ENCODE measurements at regions of chr6 and their contacts with region 1.

Region 1: GRCh38 chr6:152290693-152291092 is 346.5 kb downstream of the SYNE1 start:
- DNase-seq: no peak
- ATAC-seq: no peak
- H3K4me3 Mint-ChIP-seq: no peak overlapping the region
- H3K27ac Mint-ChIP-seq: no peak overlapping the region
- H3K4me1 Mint-ChIP-seq: no peaks in the 10 kb centered on the region
- H3K27me3 Mint-ChIP-seq: no peaks in the 10 kb centered on the region

Region 2: DNA sequence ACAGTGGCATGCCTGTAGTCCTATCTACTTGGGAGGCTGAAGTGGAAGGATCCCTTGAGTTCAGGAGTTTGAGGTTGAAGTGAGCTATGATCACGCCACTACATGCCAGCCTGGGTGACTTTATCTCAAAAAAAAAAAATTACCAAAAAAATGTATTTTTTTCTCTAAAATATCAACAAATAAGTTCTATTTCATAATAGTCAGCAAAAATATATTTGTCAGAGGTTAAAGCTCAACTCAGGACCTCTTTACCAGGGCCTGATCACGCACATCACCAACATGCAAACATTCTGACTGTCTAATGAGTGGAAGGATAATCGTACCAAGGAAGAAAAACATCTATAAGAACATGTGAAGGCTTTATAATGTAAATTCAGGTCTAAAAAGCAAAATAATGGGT is 40.6 kb before region 1 on chr6:
- CTCF ChIA-PET with region 1: no interaction called
- DNase-seq: no peak
- ATAC-seq: no peak
- H3K4me3 Mint-ChIP-seq: no peak overlapping the region
- H3K27ac Mint-ChIP-seq: no peak overlapping the region
- H3K4me1 Mint-ChIP-seq: no peaks in the 10 kb centered on the region
- H3K27me3 Mint-ChIP-seq: no peaks in the 10 kb centered on the region

Region 3: DNA sequence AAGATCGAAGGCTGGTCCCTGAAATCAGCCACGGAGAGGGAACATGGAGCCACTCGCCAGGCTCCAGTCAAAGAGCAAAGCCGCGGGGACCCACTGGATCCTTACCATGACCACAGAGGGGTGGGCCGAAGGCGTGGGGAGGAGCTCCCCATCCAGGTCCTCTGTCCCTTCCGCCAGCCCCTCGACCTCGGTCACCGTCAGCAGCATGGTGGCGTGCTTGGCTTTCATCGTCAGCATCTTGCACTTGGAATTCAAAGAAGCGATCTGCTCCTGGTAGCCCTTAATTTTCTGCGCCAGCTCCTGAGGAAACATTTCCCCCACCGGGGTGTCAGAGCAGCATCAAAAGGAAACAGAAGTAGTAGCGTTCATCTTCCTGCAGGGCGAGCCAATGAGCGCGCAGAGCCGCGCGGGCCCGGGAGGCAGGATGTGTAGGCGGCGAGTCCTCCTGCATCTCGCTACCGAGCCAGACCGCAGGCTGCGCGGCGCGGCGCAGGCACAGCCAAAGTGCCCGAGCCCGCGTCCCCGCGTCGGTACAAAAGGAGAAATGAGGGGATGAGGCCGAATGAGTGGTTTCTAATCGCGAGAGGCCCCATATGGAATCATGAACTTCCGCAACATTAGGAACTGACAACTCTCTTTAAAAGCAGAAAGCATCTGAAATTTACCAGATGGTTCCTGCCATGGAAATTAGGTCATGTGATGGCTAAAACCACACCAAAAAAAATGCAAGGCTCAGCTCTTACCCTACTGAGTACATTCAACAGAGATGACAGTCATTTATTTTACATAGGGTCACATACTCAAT is 11.3 kb after region 1 on chr6:
- CTCF ChIA-PET with region 1: interaction called, 11 read pairs
- DNase-seq: peak; percentile 94
- ATAC-seq: peak; percentile 98
- H3K4me3 Mint-ChIP-seq: peak overlapping the region; percentile 96
- H3K27ac Mint-ChIP-seq: peak overlapping the region; percentile 100
- H3K4me1 Mint-ChIP-seq: peaks cover 32% of the 10 kb centered on the region
- H3K27me3 Mint-ChIP-seq: no peaks in the 10 kb centered on the region